ENCODE measurements at regions of chr2 and their contacts with region 1.

Region 1: GRCh38 chr2:84022810-84023431 is 436.2 kb downstream of the SUCLG1 start:
- DNase-seq: peak; percentile 50 to 68 (median 53)
- H3K4me3 ChIP-seq: no peak overlapping the region
- H3K27ac ChIP-seq: no peak overlapping the region
- H3K4me1 ChIP-seq: no peaks in the 10 kb centered on the region
- H3K27me3 ChIP-seq: no peaks in the 10 kb centered on the region

Region 2: DNA sequence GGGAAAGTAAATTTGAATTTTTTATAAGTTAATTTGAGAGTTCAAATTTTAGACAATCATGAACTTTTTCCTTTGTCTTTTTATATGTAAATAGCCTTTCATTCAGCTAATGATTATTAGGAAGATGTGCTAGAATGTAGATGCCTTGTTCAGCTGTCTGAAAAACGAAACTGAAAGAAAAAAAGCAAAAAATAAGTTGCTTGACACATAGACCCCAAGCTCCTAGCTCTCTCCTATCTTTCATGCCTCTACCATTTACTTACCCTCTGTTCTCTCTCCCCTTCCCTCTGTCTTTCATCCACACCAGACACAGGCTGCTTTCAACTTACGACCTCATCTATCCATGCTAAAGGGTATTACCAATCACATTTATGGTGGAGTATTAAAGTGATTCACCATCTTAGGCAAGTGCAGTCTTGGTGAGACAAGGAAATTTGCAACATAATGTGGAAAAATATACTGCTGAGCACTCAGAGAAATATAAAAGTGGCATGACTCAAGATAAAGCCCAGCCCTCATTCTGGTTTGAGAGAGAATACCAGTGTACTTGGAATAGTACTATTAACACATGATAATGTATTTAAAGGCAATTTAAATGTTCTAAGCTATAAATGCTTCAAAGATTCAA is 10.5 kb after region 1 on chr2:
- CTCF ChIA-PET with region 1: interaction called, 16 read pairs
- POLR2A ChIA-PET with region 1: no interaction called
- DNase-seq: peak in 2 of 3 donors; percentile 19 to 39
- H3K4me3 ChIP-seq: peak overlapping the region in 1 of 7 experiments; percentile 23
- H3K27ac ChIP-seq: no peak overlapping the region
- H3K4me1 ChIP-seq: peaks cover 0 to 24% (median 2%) of the 10 kb centered on the region in 4 experiments
- H3K27me3 ChIP-seq: no peaks in the 10 kb centered on the region

Region 3: DNA sequence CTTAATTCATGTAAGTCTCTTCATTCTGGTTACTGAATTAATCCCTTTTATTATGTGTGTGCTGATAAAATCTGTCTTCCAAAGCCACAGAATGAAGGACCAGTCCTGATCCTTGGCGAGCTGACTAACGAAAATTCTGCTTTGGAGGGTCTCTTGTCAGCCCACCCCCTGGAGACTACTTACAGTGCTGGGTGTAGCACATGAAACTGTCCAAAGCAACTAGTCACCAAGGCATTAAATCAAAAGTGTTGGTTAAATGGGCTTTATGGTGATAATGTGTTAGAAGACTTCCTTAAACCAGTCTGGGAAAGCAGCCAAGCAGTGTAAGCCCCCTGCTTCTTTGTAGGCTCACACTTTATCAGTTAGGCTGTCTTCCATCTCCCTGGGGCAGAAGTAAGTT is 15.9 kb after region 1 on chr2:
- CTCF ChIA-PET with region 1: interaction called, 16 read pairs
- POLR2A ChIA-PET with region 1: no interaction called
- DNase-seq: peak; percentile 81 to 93 (median 90)
- H3K4me3 ChIP-seq: peak overlapping the region in 1 of 7 experiments; percentile 37
- H3K27ac ChIP-seq: no peak overlapping the region
- H3K4me1 ChIP-seq: peaks cover 12 to 33% (median 18%) of the 10 kb centered on the region in 4 experiments
- H3K27me3 ChIP-seq: peaks cover 0 to 3% (median 0%) of the 10 kb centered on the region in 5 experiments

Region 4: GRCh38 chr2:84077492-84077891 is 54.6 kb after region 1 on chr2:
- CTCF ChIA-PET with region 1: interaction called, 17 read pairs
- POLR2A ChIA-PET with region 1: no interaction called
- DNase-seq: peak; percentile 17 to 60 (median 50)
- H3K4me3 ChIP-seq: no peak overlapping the region
- H3K27ac ChIP-seq: no peak overlapping the region
- H3K4me1 ChIP-seq: no peaks in the 10 kb centered on the region
- H3K27me3 ChIP-seq: peaks cover 0 to 4% (median 2%) of the 10 kb centered on the region in 5 experiments

Measured in common myeloid progenitor, CD34-positive (primary cell).